Heart left ventricle (tissue), 16 donors: ENCODE measurements at regions of chr1 and their contacts with region 1.

Region 1: DNA sequence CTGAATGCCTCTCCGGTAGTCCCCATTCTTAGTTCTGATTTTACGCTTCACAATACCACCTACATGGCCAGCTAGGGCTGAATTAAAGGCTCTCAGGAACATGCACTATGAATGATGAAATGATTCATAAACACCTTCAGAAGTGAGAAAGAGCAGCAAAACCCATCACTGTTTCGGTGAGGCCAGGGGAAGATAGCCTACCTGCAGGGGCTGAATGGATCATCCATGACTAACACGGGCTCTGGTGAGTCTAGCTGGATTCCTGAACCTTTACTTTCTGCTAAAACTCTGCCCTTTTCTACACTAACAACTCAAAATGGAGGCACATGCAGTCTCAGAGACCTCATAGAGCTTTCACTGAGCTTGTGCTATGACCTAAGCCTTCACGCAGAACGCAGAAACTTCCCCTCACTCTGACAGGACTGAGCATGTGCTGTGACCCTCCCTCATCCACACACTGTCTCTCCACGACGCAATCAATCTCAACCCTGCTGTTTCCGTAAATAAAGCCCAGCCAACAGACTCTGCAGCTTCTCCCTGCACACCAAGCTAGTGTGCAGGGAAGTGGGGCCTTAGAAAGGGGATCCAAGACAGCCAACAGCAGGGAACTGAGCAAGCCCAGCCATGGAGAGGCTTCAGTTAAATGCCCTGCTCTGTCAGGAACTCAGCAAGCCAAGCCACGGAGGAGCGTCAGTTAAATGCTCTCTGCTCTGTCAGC is 207.8 kb downstream of the SLC45A1 start:
- DNase-seq: peak; percentile 75 to 90 (median 89)
- ATAC-seq: peak; percentile 95 to 100 (median 99)
- H3K4me3 ChIP-seq: peak overlapping the region; percentile 8 to 73 (median 58)
- H3K27ac ChIP-seq: peak overlapping the region; percentile 76 to 92 (median 86)
- H3K4me1 ChIP-seq: peaks cover 11 to 55% (median 39%) of the 10 kb centered on the region in 12 donors
- H3K27me3 ChIP-seq: no peaks in the 10 kb centered on the region
- CTCF ChIP-seq: no peak
- POLR2A ChIP-seq: peak in 1 of 2 donors; percentile 70

Region 2: DNA sequence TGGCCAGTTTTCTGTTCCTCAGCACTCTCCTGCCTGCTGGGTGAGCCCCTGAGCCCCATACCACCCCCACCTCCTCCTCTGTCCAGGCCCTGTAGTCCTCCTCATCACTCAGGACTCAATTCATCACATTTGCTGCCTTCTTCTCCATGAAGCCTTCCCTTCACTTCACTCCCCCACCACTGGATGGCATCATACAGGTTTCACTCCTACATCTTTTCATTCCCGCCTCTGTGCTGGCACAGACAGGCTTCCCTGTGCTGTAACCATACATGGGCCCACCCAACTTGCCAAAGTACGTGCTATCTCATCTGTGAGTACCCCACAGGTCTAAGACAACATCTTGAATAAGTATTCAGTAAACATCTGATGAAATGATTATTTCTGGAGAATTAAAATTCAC is 150.9 kb before region 1 on chr1:
- intact Hi-C with region 1: loop called in 2 of 10 experiments (anchors 5 to 10 kb)
- DNase-seq: no peak
- ATAC-seq: no peak
- H3K4me3 ChIP-seq: no peak overlapping the region
- H3K27ac ChIP-seq: peak overlapping the region; percentile 44 to 97 (median 90)
- H3K4me1 ChIP-seq: peaks cover 19 to 93% (median 82%) of the 10 kb centered on the region in 12 donors
- H3K27me3 ChIP-seq: no peaks in the 10 kb centered on the region
- CTCF ChIP-seq: peak; percentile 9 to 46 (median 30)
- POLR2A ChIP-seq: no peak

Region 3: GRCh38 chr1:8409106-8409505 is 116.6 kb before region 1 on chr1:
- intact Hi-C with region 1: loop called in 1 of 10 experiments (anchors 5 kb)
- DNase-seq: no peak
- ATAC-seq: peak in 3 of 4 donors; percentile 50 to 70 (median 59)
- H3K4me3 ChIP-seq: peak overlapping the region in 2 of 12 donors; percentile 10 to 24
- H3K27ac ChIP-seq: peak overlapping the region; percentile 72 to 99 (median 82)
- H3K4me1 ChIP-seq: peaks cover 24 to 99% (median 79%) of the 10 kb centered on the region in 12 donors
- H3K27me3 ChIP-seq: no peaks in the 10 kb centered on the region
- CTCF ChIP-seq: peak in 10 of 12 donors; percentile 34 to 67 (median 47)
- POLR2A ChIP-seq: no peak

Region 4: DNA sequence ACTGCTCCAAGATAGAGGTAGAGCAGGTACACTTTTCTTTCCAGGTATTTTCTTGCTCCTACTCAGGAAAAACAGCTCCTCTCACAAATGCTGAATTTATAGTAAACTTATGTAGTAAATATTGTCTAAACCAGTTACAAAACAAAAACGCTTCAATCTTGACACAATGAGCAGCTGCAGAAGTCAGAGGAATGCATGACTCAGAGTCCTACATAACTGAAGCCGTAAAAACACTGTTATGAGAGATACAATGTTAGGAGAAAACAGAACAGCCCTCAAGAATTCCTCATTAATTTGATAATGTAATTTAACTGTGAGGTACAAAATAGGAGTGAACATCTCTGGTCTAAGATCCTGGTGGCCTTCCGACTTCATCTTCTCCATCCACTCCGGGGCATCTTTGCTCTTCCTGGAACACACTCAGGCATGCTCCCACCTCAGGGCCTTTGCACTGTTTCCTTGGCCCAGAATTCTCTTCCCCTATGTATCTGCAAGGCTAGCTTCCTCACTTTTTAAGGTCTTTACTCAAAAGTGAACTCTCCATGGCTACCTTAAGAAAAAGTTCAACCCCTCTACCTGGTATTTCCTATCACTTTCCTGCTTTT is 69.3 kb before region 1 on chr1:
- intact Hi-C with region 1: loop called in 2 of 10 experiments (anchors 5 to 10 kb)
- DNase-seq: no peak
- ATAC-seq: peak in 3 of 4 donors; percentile 42 to 70 (median 60)
- H3K4me3 ChIP-seq: no peak overlapping the region
- H3K27ac ChIP-seq: peak overlapping the region in 10 of 12 donors; percentile 13 to 77 (median 43)
- H3K4me1 ChIP-seq: peaks cover 0 to 54% (median 34%) of the 10 kb centered on the region in 12 donors
- H3K27me3 ChIP-seq: no peaks in the 10 kb centered on the region
- CTCF ChIP-seq: no peak
- POLR2A ChIP-seq: no peak

Region 5: DNA sequence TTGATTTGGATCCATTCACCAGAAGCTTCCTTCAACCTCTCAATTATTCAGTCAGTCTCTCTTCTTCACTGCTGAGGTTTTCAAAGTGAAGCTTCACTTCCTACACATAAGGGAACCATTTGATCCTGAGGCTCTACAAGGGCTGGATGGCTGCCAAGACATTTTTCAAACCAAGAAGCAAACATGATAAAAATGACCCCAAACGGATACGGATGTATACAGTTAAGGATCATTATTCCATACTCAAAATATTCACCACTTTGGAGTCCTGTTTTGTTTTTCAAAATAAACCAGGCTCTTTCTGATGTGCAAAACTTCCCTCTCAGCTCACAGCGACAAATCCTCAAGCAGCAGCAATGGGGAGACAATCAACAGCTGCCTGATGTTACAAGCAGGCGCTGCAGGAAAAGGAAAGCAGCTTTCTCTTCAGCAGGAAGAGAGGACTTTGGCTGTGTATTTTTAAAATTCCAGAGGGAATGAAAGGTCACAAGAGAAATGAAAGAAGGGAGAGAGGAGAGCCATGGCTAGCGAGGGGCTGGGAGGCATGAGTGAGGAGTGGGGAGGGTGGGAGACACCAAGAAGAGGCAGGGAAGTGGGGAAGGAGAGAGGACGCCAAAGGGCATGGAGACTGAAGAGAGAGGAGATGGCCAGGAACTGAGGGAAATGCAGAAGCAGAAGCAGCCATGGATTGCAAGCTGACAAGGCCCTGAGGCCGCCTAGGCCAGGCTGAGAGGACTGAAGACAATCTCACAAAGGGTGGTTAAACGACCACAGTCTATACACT is 62.4 kb before region 1 on chr1:
- intact Hi-C with region 1: loop called in 2 of 10 experiments (anchors 5 to 10 kb)
- DNase-seq: peak in 3 of 5 donors; percentile 50 to 66 (median 54)
- ATAC-seq: peak; percentile 53 to 72 (median 64)
- H3K4me3 ChIP-seq: peak overlapping the region in 6 of 12 donors; percentile 1 to 17 (median 8)
- H3K27ac ChIP-seq: peak overlapping the region; percentile 42 to 89 (median 80)
- H3K4me1 ChIP-seq: peaks cover 4 to 59% (median 40%) of the 10 kb centered on the region in 12 donors
- H3K27me3 ChIP-seq: no peaks in the 10 kb centered on the region
- CTCF ChIP-seq: no peak
- POLR2A ChIP-seq: no peak

Region 6: DNA sequence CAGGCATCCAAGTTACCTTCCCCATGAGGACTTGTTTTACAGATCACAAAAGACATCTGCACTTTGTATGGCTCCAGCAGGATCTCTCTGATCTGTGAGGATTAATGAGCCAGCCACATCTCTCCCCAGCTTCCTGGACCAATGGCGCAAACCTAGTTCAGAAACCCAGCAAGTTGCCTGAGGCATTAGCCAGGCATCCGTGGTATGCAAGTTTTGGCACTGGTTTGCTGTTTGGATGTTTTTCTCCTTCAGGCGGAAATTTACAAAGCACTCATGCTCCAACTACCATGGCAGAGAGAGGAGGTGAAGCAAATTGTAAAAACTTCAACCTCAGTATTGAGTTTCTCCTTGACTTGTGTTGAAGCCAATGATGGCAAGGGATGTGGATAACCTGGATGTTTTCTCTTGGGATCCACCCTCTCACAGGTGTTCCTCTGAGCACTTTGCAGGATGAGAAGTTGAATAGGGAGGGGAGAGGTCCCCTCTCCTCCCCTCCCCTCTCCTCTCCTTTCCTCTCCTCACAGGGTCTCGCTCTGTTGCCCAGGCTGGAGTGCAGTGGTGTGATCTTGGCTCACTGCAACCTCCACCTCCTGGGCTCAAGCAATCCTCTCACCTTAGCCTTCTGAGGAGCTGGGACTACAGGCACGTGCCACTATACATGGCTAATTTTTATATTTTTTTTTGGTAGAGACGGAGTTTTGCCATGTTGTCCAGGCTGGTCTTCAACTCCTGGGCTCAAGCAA is 378.4 kb after region 1 on chr1:
- intact Hi-C with region 1: no loop called
- DNase-seq: peak in 1 of 5 donors; percentile 41
- ATAC-seq: peak in 3 of 4 donors; percentile 28 to 75 (median 63)
- H3K4me3 ChIP-seq: no peak overlapping the region
- H3K27ac ChIP-seq: no peak overlapping the region
- H3K4me1 ChIP-seq: peaks cover 0 to 16% (median 6%) of the 10 kb centered on the region in 12 donors
- H3K27me3 ChIP-seq: no peaks in the 10 kb centered on the region
- CTCF ChIP-seq: no peak
- POLR2A ChIP-seq: no peak

Region 7: GRCh38 chr1:8925406-8925805 is 399.7 kb after region 1 on chr1:
- intact Hi-C with region 1: no loop called
- DNase-seq: no peak
- ATAC-seq: no peak
- H3K4me3 ChIP-seq: no peak overlapping the region
- H3K27ac ChIP-seq: no peak overlapping the region
- H3K4me1 ChIP-seq: no peaks in the 10 kb centered on the region
- H3K27me3 ChIP-seq: no peaks in the 10 kb centered on the region
- CTCF ChIP-seq: no peak
- POLR2A ChIP-seq: no peak